WTC11 (cell line): ENCODE measurements at regions of chr6 and their contacts with region 1.

Region 1: GRCh38 chr6:40587240-40588069 is at the start of gene LRFN2:
- DNase-seq: peak; percentile 86
- ATAC-seq: peak; percentile 81
- H3K4me3 Mint-ChIP-seq: peak within 1 kb of the TSS; percentile 80
- H3K27ac Mint-ChIP-seq: no peak within 1 kb of the TSS
- H3K4me1 Mint-ChIP-seq: peaks cover 40% of the 10 kb centered on the region
- H3K27me3 Mint-ChIP-seq: peaks cover 49% of the 10 kb centered on the region
- CTCF ChIP-seq: peak; percentile 59
- total RNA-seq, gene LRFN2: 1.3 to 1.6 TPM (median 1.4 TPM) in 3 replicates

Region 2: DNA sequence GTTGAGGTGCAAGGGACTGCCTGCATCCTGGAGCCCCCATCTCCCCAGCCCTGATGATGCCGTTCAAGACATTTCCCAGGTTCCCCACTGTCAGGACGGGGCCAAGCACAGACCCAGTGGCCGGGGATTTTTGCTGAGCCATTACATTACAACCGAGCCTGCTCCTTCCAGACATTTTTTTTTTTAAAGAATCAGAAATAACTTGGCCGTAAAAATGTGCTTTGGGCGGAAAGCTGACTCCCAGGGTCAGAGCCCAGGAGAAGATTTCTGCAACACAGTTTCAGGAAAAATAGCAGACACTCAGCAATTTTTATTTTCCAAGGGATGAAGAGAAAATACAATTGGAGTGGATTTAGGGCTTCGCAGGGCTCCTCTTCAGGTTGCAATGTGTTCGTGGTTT is 88.2 kb before region 1 on chr6:
- CTCF ChIA-PET with region 1: no interaction called
- POLR2A ChIA-PET with region 1: no interaction called
- DNase-seq: no peak
- ATAC-seq: no peak
- H3K4me3 Mint-ChIP-seq: no peak overlapping the region
- H3K27ac Mint-ChIP-seq: no peak overlapping the region
- H3K4me1 Mint-ChIP-seq: no peaks in the 10 kb centered on the region
- H3K27me3 Mint-ChIP-seq: no peaks in the 10 kb centered on the region; the same call in 1 of the 2 replicates
- CTCF ChIP-seq: no peak

Region 3: GRCh38 chr6:40523505-40524172 is 63.8 kb before region 1 on chr6:
- CTCF ChIA-PET with region 1: interaction called, 10 read pairs
- POLR2A ChIA-PET with region 1: no interaction called
- DNase-seq: no peak
- ATAC-seq: peak; percentile 34; the same call in 1 of the 2 replicates
- H3K4me3 Mint-ChIP-seq: no peak overlapping the region; the same call in 1 of the 2 replicates
- H3K27ac Mint-ChIP-seq: no peak overlapping the region
- H3K4me1 Mint-ChIP-seq: peaks cover 57% of the 10 kb centered on the region
- H3K27me3 Mint-ChIP-seq: no peaks in the 10 kb centered on the region
- CTCF ChIP-seq: no peak

Region 4: DNA sequence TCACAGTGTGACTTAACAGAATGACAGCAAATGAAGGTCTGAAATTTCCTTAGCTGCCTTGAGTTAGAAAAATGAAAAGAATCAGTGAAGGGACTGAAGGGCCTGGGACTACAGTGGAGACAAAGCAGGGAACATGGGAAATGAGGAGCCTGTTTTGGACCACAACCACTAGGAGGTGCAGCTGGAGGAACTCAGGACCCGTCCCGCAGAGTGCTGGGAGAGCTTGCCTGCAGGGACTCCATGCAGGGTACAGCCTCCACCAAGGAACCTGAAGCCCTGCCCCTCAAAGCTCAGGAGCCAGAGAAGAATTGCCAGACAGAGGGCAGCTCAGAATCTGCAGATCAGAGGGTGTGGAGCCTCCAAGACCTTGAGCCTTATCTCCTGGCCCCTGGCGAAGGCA is 51.0 kb before region 1 on chr6:
- CTCF ChIA-PET with region 1: interaction called, 23 read pairs
- POLR2A ChIA-PET with region 1: no interaction called
- DNase-seq: peak; percentile 54
- ATAC-seq: peak; percentile 93
- H3K4me3 Mint-ChIP-seq: no peak overlapping the region
- H3K27ac Mint-ChIP-seq: no peak overlapping the region
- H3K4me1 Mint-ChIP-seq: peaks cover 22% of the 10 kb centered on the region
- H3K27me3 Mint-ChIP-seq: no peaks in the 10 kb centered on the region; the same call in 1 of the 2 replicates
- CTCF ChIP-seq: no peak

Region 5: GRCh38 chr6:40550202-40551101 is 37.0 kb before region 1 on chr6:
- CTCF ChIA-PET with region 1: interaction called, 23 read pairs
- POLR2A ChIA-PET with region 1: interaction called, 3 read pairs
- DNase-seq: no peak
- ATAC-seq: peak; percentile 33; the same call in 1 of the 2 replicates
- H3K4me3 Mint-ChIP-seq: no peak overlapping the region
- H3K27ac Mint-ChIP-seq: no peak overlapping the region
- H3K4me1 Mint-ChIP-seq: peaks cover 54% of the 10 kb centered on the region
- H3K27me3 Mint-ChIP-seq: no peaks in the 10 kb centered on the region
- CTCF ChIP-seq: peak; percentile 44

Region 6: GRCh38 chr6:40563111-40563510 is 24.3 kb before region 1 on chr6:
- CTCF ChIA-PET with region 1: interaction called, 12 read pairs
- POLR2A ChIA-PET with region 1: no interaction called
- DNase-seq: peak; percentile 27
- ATAC-seq: peak; percentile 86
- H3K4me3 Mint-ChIP-seq: no peak overlapping the region
- H3K27ac Mint-ChIP-seq: no peak overlapping the region
- H3K4me1 Mint-ChIP-seq: peaks cover 24% of the 10 kb centered on the region
- H3K27me3 Mint-ChIP-seq: no peaks in the 10 kb centered on the region
- CTCF ChIP-seq: no peak

Region 7: GRCh38 chr6:40788661-40789655 is 201.5 kb after region 1 on chr6:
- CTCF ChIA-PET with region 1: no interaction called
- POLR2A ChIA-PET with region 1: no interaction called
- DNase-seq: no peak
- ATAC-seq: no peak
- H3K4me3 Mint-ChIP-seq: no peak overlapping the region
- H3K27ac Mint-ChIP-seq: no peak overlapping the region
- H3K4me1 Mint-ChIP-seq: peaks cover 17% of the 10 kb centered on the region
- H3K27me3 Mint-ChIP-seq: peaks cover 4% of the 10 kb centered on the region; the same call in 1 of the 2 replicates
- CTCF ChIP-seq: no peak

Region 8: GRCh38 chr6:40845553-40845952 is 258.1 kb after region 1 on chr6:
- CTCF ChIA-PET with region 1: interaction called, 10 read pairs
- POLR2A ChIA-PET with region 1: no interaction called
- DNase-seq: peak; percentile 71
- ATAC-seq: peak; percentile 90
- H3K4me3 Mint-ChIP-seq: no peak overlapping the region
- H3K27ac Mint-ChIP-seq: no peak overlapping the region
- H3K4me1 Mint-ChIP-seq: peaks cover 24% of the 10 kb centered on the region
- H3K27me3 Mint-ChIP-seq: no peaks in the 10 kb centered on the region; the same call in 1 of the 2 replicates
- CTCF ChIP-seq: peak; percentile 34; the same call in 1 of the 2 replicates